ENCODE measurements at regions of chr3 and their contacts with region 1.

Region 1: GRCh38 chr3:101928890-101929289 is 79.6 kb downstream of the NFKBIZ start:
- DNase-seq: no peak
- ATAC-seq: no peak
- H3K4me3 ChIP-seq: no peak overlapping the region
- H3K4me3 Mint-ChIP-seq: no peak overlapping the region
- H3K27ac ChIP-seq: no peak overlapping the region
- H3K27ac Mint-ChIP-seq: no peak overlapping the region
- H3K4me1 ChIP-seq: peaks cover 19% of the 10 kb centered on the region
- H3K4me1 Mint-ChIP-seq: peaks cover 18% of the 10 kb centered on the region
- H3K27me3 ChIP-seq: no peaks in the 10 kb centered on the region
- H3K27me3 Mint-ChIP-seq: no peaks in the 10 kb centered on the region
- CTCF ChIP-seq: no peak

Region 2: GRCh38 chr3:101102678-101103296 is 826.1 kb before region 1 on chr3:
- CTCF ChIA-PET with region 1: no interaction called
- POLR2A ChIA-PET with region 1: no interaction called
- intact Hi-C with region 1: no loop called
- DNase-seq: no peak
- ATAC-seq: no peak
- H3K4me3 ChIP-seq: no peak overlapping the region
- H3K4me3 Mint-ChIP-seq: no peak overlapping the region
- H3K27ac ChIP-seq: no peak overlapping the region
- H3K27ac Mint-ChIP-seq: no peak overlapping the region
- H3K4me1 ChIP-seq: no peaks in the 10 kb centered on the region
- H3K4me1 Mint-ChIP-seq: no peaks in the 10 kb centered on the region
- H3K27me3 ChIP-seq: no peaks in the 10 kb centered on the region
- H3K27me3 Mint-ChIP-seq: peaks cover 13% of the 10 kb centered on the region
- CTCF ChIP-seq: no peak

Region 3: DNA sequence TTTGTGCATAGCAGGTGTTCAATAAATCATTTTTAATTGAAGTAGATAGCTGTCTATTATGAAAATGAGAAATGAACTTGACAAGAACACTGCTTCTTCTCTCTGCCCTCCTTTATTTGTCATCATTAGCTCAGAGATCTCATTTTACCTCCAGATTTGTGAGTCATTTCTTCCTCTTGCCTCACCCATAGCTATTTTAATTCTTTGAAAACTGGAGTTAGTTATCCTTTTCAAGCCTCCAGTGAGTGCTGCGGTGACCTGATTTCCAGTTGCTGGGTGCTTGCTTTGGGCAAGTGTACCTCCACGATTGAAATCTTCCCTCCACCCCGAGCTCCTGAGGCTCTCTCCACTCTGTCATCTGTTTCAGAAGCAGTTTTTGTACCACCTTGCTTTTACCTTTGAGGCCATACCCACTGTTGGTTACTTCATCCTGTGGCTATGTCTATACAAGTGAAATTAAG is 35.0 kb after region 1 on chr3:
- CTCF ChIA-PET with region 1: no interaction called
- POLR2A ChIA-PET with region 1: no interaction called
- intact Hi-C with region 1: loop called in 1 of 2 experiments (anchors 5 kb)
- DNase-seq: no peak
- ATAC-seq: no peak
- H3K4me3 ChIP-seq: no peak overlapping the region
- H3K4me3 Mint-ChIP-seq: no peak overlapping the region
- H3K27ac ChIP-seq: no peak overlapping the region
- H3K27ac Mint-ChIP-seq: no peak overlapping the region
- H3K4me1 ChIP-seq: no peaks in the 10 kb centered on the region
- H3K4me1 Mint-ChIP-seq: no peaks in the 10 kb centered on the region
- H3K27me3 ChIP-seq: no peaks in the 10 kb centered on the region
- H3K27me3 Mint-ChIP-seq: no peaks in the 10 kb centered on the region
- CTCF ChIP-seq: no peak